Heart right ventricle (tissue), 16 donors: ENCODE measurements at regions of chr3 and their contacts with region 1.

Region 1: GRCh38 chr3:128503164-128503651 is 10.2 kb upstream of the GATA2 start:
- DNase-seq: no peak
- ATAC-seq: peak in 2 of 8 donors; percentile 18 to 35
- H3K4me3 ChIP-seq: no peak overlapping the region
- H3K27ac ChIP-seq: no peak overlapping the region
- H3K4me1 ChIP-seq: peaks cover 0 to 5% (median 1%) of the 10 kb centered on the region in 9 donors
- H3K27me3 ChIP-seq: peaks cover 3 to 49% (median 22%) of the 10 kb centered on the region in 7 donors
- CTCF ChIP-seq: peak in 7 of 9 donors; percentile 17 to 39 (median 25)

Region 2: GRCh38 chr3:128541246-128541645 is 38.0 kb after region 1 on chr3:
- intact Hi-C with region 1: loop called in 1 of 10 experiments (anchors 5 kb)
- DNase-seq: no peak
- ATAC-seq: no peak
- H3K4me3 ChIP-seq: no peak overlapping the region
- H3K27ac ChIP-seq: no peak overlapping the region
- H3K4me1 ChIP-seq: peaks cover 0 to 4% (median 0%) of the 10 kb centered on the region in 9 donors
- H3K27me3 ChIP-seq: peaks cover 0 to 6% (median 0%) of the 10 kb centered on the region in 7 donors
- CTCF ChIP-seq: no peak

Region 3: DNA sequence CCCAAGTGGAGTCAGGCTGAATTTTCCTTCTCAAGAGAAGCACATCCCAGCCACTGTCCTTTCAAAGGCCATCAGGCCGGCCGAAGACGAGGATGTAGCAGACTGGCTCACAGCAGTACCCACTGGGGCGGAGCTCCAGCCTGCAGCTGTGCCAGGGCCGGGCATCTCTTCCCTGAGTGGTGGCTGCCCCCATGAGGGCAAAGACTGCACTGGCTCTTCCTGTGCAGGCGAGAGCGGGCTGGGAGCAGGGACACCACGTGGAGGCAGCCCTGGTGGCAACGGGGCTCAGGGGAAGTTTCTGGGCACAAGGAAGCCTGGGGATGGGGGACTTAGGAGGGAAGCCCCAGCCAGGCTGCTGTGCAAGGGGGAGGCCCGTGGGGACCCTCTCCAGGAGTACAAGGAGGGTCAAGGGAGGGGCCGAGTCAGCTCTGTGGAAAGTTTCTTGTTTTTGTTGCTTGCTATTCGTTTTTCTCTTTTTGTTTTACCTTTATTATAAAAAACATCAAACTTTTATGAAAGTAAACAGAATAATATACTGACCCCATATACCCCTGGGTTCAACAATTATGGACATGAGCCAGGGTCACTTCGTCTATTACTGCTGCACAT is 81.3 kb after region 1 on chr3:
- intact Hi-C with region 1: loop called in 2 of 10 experiments (anchors 5 kb)
- DNase-seq: peak; percentile 74 to 75
- ATAC-seq: peak; percentile 94 to 100 (median 98)
- H3K4me3 ChIP-seq: no peak overlapping the region
- H3K27ac ChIP-seq: no peak overlapping the region
- H3K4me1 ChIP-seq: peaks cover 0 to 11% (median 3%) of the 10 kb centered on the region in 9 donors
- H3K27me3 ChIP-seq: peaks cover 0 to 4% (median 0%) of the 10 kb centered on the region in 7 donors
- CTCF ChIP-seq: peak; percentile 44 to 84 (median 74)

Region 4: GRCh38 chr3:129106331-129106730 is 603.1 kb after region 1 on chr3:
- intact Hi-C with region 1: no loop called
- DNase-seq: no peak
- ATAC-seq: peak in 7 of 8 donors; percentile 31 to 66 (median 41)
- H3K4me3 ChIP-seq: no peak overlapping the region
- H3K27ac ChIP-seq: no peak overlapping the region
- H3K4me1 ChIP-seq: peaks cover 0 to 25% (median 14%) of the 10 kb centered on the region in 9 donors
- H3K27me3 ChIP-seq: no peaks in the 10 kb centered on the region
- CTCF ChIP-seq: peak in 1 of 9 donors; percentile 10